ENCODE measurements at regions of chr17 and their contacts with region 1.

Region 1: GRCh38 chr17:9414471-9414870 is 161.1 kb downstream of the STX8 start:
- DNase-seq: no peak
- ATAC-seq: peak; percentile 47
- H3K4me3 Mint-ChIP-seq: no peak overlapping the region
- H3K27ac Mint-ChIP-seq: no peak overlapping the region
- H3K4me1 Mint-ChIP-seq: peaks cover 21% of the 10 kb centered on the region
- H3K27me3 Mint-ChIP-seq: no peaks in the 10 kb centered on the region
- CTCF ChIP-seq: no peak

Region 2: GRCh38 chr17:9444687-9445086 is 30.2 kb after region 1 on chr17:
- CTCF ChIA-PET with region 1: no interaction called
- POLR2A ChIA-PET with region 1: interaction called, 10 read pairs
- intact Hi-C with region 1: no loop called
- DNase-seq: no peak
- ATAC-seq: no peak
- H3K4me3 Mint-ChIP-seq: no peak overlapping the region
- H3K27ac Mint-ChIP-seq: no peak overlapping the region
- H3K4me1 Mint-ChIP-seq: no peaks in the 10 kb centered on the region
- H3K27me3 Mint-ChIP-seq: no peaks in the 10 kb centered on the region
- CTCF ChIP-seq: no peak